ENCODE measurements at regions of chr19 and their contacts with region 1.

Region 1: DNA sequence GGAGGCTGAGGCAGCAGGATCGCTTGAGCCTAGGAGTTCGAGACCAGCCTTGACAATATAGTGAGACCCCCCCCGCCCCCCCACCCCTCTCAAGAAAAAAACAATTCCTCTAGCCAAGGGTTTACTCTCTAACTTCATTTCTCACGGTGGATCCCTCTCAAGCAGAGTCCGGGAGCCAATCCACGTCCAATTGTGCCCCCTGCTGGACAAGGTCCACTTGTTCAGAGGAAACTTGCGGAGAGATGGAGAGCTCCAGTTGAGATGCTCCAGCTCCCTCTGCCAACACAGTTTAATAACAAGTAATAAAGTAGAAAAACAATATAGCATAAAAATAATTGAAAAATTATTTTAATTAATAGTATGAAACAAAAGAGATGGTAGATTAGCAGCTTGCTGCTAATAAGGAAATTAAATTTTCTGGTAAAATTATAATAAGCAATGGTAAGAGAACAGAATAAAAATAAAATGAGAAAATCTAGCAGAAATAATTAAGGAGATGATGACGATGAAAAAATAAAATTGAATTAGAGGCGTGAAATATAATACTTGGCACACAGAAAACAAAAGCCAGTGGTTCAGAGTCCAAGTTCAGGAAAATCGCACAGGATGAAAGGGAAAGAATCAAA is 14.5 kb upstream of the SIGLEC14 start:
- DNase-seq: peak; percentile 46
- ATAC-seq: peak; percentile 34
- H3K4me3 Mint-ChIP-seq: no peak overlapping the region
- H3K27ac Mint-ChIP-seq: no peak overlapping the region
- H3K4me1 Mint-ChIP-seq: peaks cover 12% of the 10 kb centered on the region
- H3K27me3 Mint-ChIP-seq: peaks cover 18% of the 10 kb centered on the region
- CTCF ChIP-seq: no peak

Region 2: GRCh38 chr19:51393959-51394836 is 266.9 kb before region 1 on chr19:
- CTCF ChIA-PET with region 1: interaction called, 13 read pairs
- POLR2A ChIA-PET with region 1: no interaction called
- intact Hi-C with region 1: loop called (anchors 1 kb)
- DNase-seq: peak; percentile 76
- ATAC-seq: peak; percentile 87
- H3K4me3 Mint-ChIP-seq: peak overlapping the region; percentile 83
- H3K27ac Mint-ChIP-seq: peak overlapping the region; percentile 90
- H3K4me1 Mint-ChIP-seq: peaks cover 37% of the 10 kb centered on the region
- H3K27me3 Mint-ChIP-seq: no peaks in the 10 kb centered on the region
- CTCF ChIP-seq: no peak

Region 3: GRCh38 chr19:51473009-51473707 is 187.9 kb before region 1 on chr19:
- CTCF ChIA-PET with region 1: interaction called, 414 read pairs
- POLR2A ChIA-PET with region 1: interaction called, 3 read pairs
- intact Hi-C with region 1: loop called (anchors 1 kb)
- DNase-seq: peak; percentile 56
- ATAC-seq: peak; percentile 67
- H3K4me3 Mint-ChIP-seq: no peak overlapping the region
- H3K27ac Mint-ChIP-seq: no peak overlapping the region
- H3K4me1 Mint-ChIP-seq: peaks cover 10% of the 10 kb centered on the region
- H3K27me3 Mint-ChIP-seq: peaks cover 5% of the 10 kb centered on the region
- CTCF ChIP-seq: peak; percentile 40

Region 4: GRCh38 chr19:51600940-51601580 is 60.0 kb before region 1 on chr19:
- CTCF ChIA-PET with region 1: interaction called, 23 read pairs
- POLR2A ChIA-PET with region 1: interaction called, 4 read pairs
- intact Hi-C with region 1: no loop called
- DNase-seq: peak; percentile 62
- ATAC-seq: peak; percentile 86
- H3K4me3 Mint-ChIP-seq: peak overlapping the region; percentile 84
- H3K27ac Mint-ChIP-seq: peak overlapping the region; percentile 81
- H3K4me1 Mint-ChIP-seq: peaks cover 48% of the 10 kb centered on the region
- H3K27me3 Mint-ChIP-seq: no peaks in the 10 kb centered on the region
- CTCF ChIP-seq: no peak

Region 5: GRCh38 chr19:51777570-51778462 is 116.7 kb after region 1 on chr19:
- CTCF ChIA-PET with region 1: interaction called, 11 read pairs
- POLR2A ChIA-PET with region 1: no interaction called
- intact Hi-C with region 1: loop called (anchors 5 kb)
- DNase-seq: no peak
- ATAC-seq: peak; percentile 61
- H3K4me3 Mint-ChIP-seq: no peak overlapping the region
- H3K27ac Mint-ChIP-seq: no peak overlapping the region
- H3K4me1 Mint-ChIP-seq: peaks cover 4% of the 10 kb centered on the region
- H3K27me3 Mint-ChIP-seq: peaks cover 56% of the 10 kb centered on the region
- CTCF ChIP-seq: no peak

Measured in activated B cell treated with CpG ODN at 0.5 μM for 24 hours (primary cell).